Prostate gland (tissue), 2 donors: ENCODE measurements at regions of chr17 and their contacts with region 1.

Region 1: DNA sequence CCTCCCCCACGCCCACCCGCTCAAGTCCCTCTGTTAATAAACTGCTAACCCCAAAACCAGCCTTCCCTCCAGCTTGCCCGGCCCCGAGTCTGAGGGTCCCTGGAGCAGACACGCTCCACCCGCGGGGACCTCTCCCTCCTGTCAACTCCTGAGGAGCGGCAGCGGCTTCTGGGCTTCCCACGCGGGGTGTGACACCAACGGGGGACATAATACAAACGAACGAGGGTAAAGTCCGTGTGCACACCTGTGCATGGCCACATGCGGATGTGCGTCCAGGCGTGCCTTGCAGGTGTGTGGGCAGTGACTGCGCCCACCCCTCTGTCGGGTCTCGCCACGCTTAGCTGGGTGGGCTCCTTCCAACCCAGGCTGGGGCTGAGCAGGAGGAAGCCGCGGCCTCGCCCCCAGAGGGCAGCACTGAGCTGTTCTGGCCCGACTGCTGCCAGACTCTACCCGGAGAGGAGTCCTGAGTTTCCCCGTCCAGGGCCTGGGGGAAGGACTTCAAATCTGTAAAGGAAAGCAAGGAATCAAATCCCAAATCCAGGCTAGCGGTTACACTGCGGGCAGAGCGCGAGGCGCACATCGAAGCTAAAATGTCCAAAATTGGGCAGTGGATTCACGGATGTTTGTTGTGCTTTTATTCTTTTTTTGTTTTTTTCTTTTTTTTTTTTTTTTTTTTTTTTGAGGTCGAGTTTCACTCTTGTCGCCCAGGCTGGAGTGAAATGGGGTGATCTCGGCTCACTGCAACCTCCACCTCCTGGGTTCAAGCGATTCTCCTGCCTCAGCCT is 24.2 kb upstream of the KRT17 start:
- DNase-seq: peak; percentile 86
- H3K4me3 ChIP-seq: peak overlapping the region; percentile 5 to 6
- H3K27ac ChIP-seq: peak overlapping the region; percentile 36 to 47
- H3K4me1 ChIP-seq: peaks cover 7% of the 10 kb centered on the region
- H3K27me3 ChIP-seq: no peaks in the 10 kb centered on the region
- CTCF ChIP-seq: peak; percentile 96 to 99 (median 98)
- POLR2A ChIP-seq: peak; percentile 39

Region 2: GRCh38 chr17:41329281-41329948 is 319.2 kb before region 1 on chr17:
- intact Hi-C with region 1: loop called (anchors 5 kb)
- DNase-seq: peak; percentile 35
- H3K4me3 ChIP-seq: no peak overlapping the region
- H3K27ac ChIP-seq: no peak overlapping the region
- H3K4me1 ChIP-seq: no peaks in the 10 kb centered on the region
- H3K27me3 ChIP-seq: no peaks in the 10 kb centered on the region
- CTCF ChIP-seq: peak in 3 of 4 experiments; percentile 45 to 78 (median 66)
- POLR2A ChIP-seq: no peak

Region 3: DNA sequence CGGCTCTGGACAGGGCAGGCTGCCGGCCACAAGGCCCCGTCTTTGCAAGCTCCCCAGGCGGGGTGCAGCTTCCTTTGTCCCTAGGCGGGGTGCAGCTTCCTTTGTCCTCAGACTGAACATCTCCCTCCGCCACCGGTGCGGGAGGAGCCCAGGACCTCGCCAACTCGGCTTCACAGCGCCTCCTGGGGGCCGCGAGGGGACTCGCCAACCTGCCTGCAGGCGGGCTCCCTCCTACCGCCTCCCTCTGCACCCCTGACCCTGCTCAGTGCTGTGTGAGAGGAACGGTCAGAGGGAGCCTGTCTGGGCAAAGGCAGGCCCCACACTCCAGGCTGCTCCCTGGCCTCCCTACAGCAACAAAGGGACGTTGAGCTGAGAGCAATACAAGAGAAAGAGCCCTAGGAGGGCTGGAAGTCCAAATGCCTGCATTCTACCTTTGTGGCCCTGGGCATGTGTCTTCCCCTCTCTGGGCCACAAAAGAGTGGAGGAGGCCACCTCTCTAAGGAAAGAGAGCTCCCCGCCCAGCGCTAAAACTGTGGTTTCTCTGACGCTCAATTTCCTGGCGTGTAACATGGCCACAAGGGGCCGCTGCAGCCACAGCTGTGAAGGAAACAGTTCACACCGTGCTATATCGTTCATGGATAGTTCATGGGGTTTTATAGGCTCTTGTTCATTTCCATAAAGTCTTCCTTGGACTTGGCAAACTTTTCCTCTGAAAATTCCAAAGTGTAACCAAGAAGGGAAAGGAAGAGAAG is 99.6 kb before region 1 on chr17:
- intact Hi-C with region 1: loop called (anchors 1 kb)
- DNase-seq: peak; percentile 83
- H3K4me3 ChIP-seq: peak overlapping the region; percentile 2 to 5
- H3K27ac ChIP-seq: peak overlapping the region; percentile 63 to 77
- H3K4me1 ChIP-seq: peaks cover 8% of the 10 kb centered on the region
- H3K27me3 ChIP-seq: no peaks in the 10 kb centered on the region
- CTCF ChIP-seq: peak; percentile 61 to 91 (median 82)
- POLR2A ChIP-seq: peak; percentile 35